Posterior vena cava (tissue), 2 donors: ENCODE measurements at regions of chr1 and their contacts with region 1.

Region 1: DNA sequence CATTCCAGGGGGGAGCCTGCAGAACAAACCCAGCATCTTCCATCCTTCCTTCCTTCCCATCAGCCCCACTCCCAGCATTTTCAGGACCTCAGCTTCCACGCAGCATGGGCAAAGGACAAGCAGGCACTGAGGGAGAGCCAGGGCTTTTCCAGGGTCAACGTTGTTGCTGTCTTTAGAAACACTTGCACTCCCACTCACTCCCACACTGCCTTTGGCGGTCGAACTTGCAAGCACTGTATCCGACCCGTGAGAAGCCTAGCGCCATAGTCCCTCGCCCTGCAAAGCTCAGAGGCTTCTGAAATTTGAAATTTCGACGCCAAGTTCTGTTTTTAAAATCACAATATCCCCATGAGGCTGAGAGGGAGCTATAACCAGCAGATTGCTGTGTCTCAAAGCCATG is 47.4 kb downstream of the KCNAB2 start:
- DNase-seq: no peak

Region 2: GRCh38 chr1:6052543-6053205 is 40.4 kb before region 1 on chr1:
- intact Hi-C with region 1: loop called in 1 of 2 experiments (anchors 2 kb)
- DNase-seq: no peak